ENCODE measurements at regions of chrX and their contacts with region 1.

Region 1: GRCh38 chrX:115650916-115651315 is 89.9 kb downstream of the PLS3 start:
- DNase-seq: no peak
- ATAC-seq: no peak
- H3K4me3 ChIP-seq: no peak overlapping the region
- H3K27ac ChIP-seq: no peak overlapping the region
- H3K4me1 ChIP-seq: no peaks in the 10 kb centered on the region
- H3K27me3 ChIP-seq: no peaks in the 10 kb centered on the region
- CTCF ChIP-seq: peak in 3 of 5 experiments; percentile 22 to 51 (median 39)
- POLR2A ChIP-seq: no peak

Region 2: GRCh38 chrX:115690511-115691216 is 39.7 kb after region 1 on chrX:
- in situ Hi-C with region 1: no loop called
- intact Hi-C with region 1: loop called (anchors 5 kb)
- DNase-seq: peak in 1 of 2 donors; percentile 10
- ATAC-seq: peak in 1 of 2 donors; percentile 53
- H3K4me3 ChIP-seq: no peak overlapping the region
- H3K27ac ChIP-seq: no peak overlapping the region
- H3K4me1 ChIP-seq: no peaks in the 10 kb centered on the region
- H3K27me3 ChIP-seq: peaks cover 0 to 2% (median 0%) of the 10 kb centered on the region in 3 donors
- CTCF ChIP-seq: peak; percentile 43 to 81 (median 62)
- POLR2A ChIP-seq: no peak